Sciatic nerve (tissue), 2 donors: ENCODE measurements at regions of chr5 and their contacts with region 1.

Region 1: GRCh38 chr5:157253547-157253946 is 12.4 kb upstream of the CYFIP2 start:
- DNase-seq: peak; percentile 68
- ATAC-seq: peak; percentile 92

Region 2: DNA sequence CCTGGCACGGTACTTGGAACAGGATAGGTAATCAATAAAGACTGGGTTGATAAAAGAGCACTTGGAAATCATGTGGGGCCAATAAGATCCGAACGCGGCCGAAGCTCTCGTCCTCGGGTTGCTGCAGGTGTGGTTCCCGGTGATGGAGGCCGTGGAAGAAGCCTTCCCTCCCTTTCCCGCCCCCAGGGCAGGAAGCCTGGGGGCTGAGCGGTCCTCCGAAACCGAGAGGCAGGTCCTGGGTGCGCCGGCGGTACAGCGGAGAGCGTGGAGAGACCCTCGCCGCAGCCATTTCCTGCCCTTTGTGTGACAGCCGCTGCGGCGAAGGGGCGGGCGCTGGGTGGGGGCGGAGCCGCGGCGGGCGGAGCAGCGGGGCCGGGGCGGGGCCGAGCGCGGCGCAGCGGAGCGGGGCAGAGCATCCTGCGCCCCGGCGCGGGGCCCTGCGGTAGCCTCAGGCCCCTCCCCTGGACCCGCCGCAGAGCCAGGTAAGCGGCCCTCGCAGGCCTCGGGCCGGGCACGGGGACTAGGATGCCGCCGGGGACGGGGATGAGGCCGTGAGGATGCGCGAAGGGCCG is 12.3 kb after region 1 on chr5 and contains the start of gene CYFIP2:
- intact Hi-C with region 1: no loop called
- DNase-seq: peak; percentile 72
- ATAC-seq: peak; percentile 86
- total RNA-seq, gene CYFIP2: 23.6 TPM

Region 3: GRCh38 chr5:157312492-157312891 is 58.9 kb after region 1 on chr5:
- intact Hi-C with region 1: loop called (anchors 5 kb)
- DNase-seq: no peak
- ATAC-seq: peak; percentile 77